K562 (cell line): ENCODE measurements at regions of chr1 and their contacts with region 1.

Region 1: DNA sequence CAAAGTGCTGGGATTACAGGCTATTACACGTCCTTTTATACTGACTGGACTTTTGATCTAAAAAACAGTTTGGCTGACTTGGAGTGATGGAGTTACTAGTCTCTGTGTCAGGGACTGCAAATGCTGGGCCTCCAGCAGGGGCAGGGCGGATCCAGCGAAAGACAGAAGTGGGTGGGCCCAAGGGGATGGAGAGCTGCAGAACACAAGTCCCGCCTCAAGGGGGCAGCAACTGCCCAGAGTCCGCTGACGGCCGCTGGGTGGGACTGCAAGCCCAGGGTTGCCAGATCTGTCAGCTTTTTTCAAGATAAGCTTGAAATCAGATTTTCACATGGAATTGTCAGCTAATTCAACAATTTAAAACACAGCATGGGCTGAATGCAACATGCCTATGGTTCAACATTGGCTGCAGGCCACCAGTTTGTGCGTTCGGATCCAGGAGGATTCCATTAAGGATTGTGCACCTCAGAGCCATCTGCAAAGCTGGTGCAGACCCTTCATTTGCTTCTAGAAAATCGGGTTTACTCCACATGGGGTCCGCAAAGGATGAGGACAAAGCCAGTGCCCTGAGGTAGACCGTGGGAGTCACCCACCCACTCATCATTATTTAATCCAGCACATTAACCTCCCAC is 10.7 kb downstream of the STMN1 start:
- DNase-seq: peak; percentile 95 to 99 (median 98)
- ATAC-seq: peak; percentile 88
- H3K4me3 ChIP-seq: no peak overlapping the region
- H3K27ac ChIP-seq: 0 out of 3 replicates have a peak overlapping the region, but pooled peaks have one; percentile 41
- H3K4me1 ChIP-seq: peaks cover 12 to 22% of the 10 kb centered on the region in 2 experiments
- H3K27me3 ChIP-seq: no peaks in the 10 kb centered on the region
- CTCF ChIP-seq: peak; percentile 100
- EP300 ChIP-seq: no peak; the same call in 1 of the 2 replicates
- POLR2A ChIP-seq: 0 out of 2 replicates have a peak, but pooled peaks have one; percentile 12
- RAD21 ChIP-seq: peak; percentile 100

Region 2: GRCh38 chr1:25174730-25175612 is 720.5 kb before region 1 on chr1:
- CTCF ChIA-PET with region 1: no interaction called
- POLR2A ChIA-PET with region 1: no interaction called
- in situ Hi-C with region 1: no loop called
- intact Hi-C with region 1: no loop called
- DNase-seq: no peak
- ATAC-seq: no peak
- H3K4me3 ChIP-seq: no peak overlapping the region
- H3K27ac ChIP-seq: no peak overlapping the region
- H3K4me1 ChIP-seq: no peaks in the 10 kb centered on the region
- H3K27me3 ChIP-seq: peaks cover 21 to 43% of the 10 kb centered on the region in 2 experiments; a peak in 4 of 5 replicates
- CTCF ChIP-seq: no peak
- EP300 ChIP-seq: no peak
- POLR2A ChIP-seq: no peak
- RAD21 ChIP-seq: no peak

Region 3: GRCh38 chr1:25879675-25880074 is 15.8 kb before region 1 on chr1:
- CTCF ChIA-PET with region 1: no interaction called
- POLR2A ChIA-PET with region 1: interaction called, 76 read pairs
- in situ Hi-C with region 1: no loop called
- intact Hi-C with region 1: no loop called
- DNase-seq: peak in 2 of 4 experiments; percentile 52 to 66
- ATAC-seq: peak; percentile 25; the same call in 2 of the 3 replicates
- H3K4me3 ChIP-seq: no peak overlapping the region
- H3K27ac ChIP-seq: no peak overlapping the region
- H3K4me1 ChIP-seq: peaks cover 24 to 40% of the 10 kb centered on the region in 2 experiments
- H3K27me3 ChIP-seq: no peaks in the 10 kb centered on the region
- CTCF ChIP-seq: no peak
- EP300 ChIP-seq: no peak
- POLR2A ChIP-seq: no peak
- RAD21 ChIP-seq: no peak

Region 4: DNA sequence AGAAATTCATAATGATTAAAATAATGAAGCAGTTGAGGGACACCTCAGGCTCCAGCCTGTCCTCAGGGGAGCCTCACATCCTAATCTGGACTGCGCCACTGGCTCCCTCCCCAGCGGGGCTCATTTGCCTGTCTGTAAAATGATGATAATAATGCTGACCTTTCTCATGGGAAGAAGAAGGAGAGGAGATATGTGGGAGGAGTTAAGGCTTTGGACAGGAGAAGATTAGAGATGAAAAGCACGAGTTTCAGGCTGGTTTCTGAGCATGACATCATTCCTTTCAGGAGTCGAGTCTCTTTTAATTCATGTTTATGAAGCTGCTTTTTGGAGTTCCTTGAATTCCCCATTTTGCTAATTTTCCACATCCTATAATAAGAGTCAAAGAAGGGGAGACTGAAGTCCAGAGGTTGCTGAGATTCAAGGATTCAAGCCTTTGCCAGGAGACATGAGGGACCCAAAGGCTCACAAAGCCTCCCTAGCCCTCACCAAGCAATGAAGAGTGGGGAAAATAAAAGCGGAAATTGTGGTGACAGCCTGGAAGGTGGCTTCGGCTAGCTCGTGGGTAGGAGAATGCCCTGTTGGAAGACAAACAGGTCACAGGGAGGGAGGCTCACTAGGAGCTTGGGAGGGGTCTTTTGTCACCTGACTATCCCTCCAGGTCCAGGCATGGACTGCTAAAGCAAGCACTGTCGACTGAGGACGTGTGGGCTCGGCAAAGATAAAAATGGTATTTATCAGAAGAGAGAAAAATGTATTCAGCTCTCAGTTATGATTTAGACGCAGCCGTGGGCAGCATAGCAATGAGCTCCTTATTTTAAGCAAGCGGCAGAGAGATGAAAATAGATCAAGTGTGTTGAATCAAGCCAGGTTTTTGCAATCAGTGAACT is 38.2 kb after region 1 on chr1:
- CTCF ChIA-PET with region 1: no interaction called
- POLR2A ChIA-PET with region 1: interaction called, 13 read pairs
- in situ Hi-C with region 1: no loop called
- intact Hi-C with region 1: no loop called
- DNase-seq: peak; percentile 72 to 96 (median 84)
- ATAC-seq: peak; percentile 96
- H3K4me3 ChIP-seq: peak overlapping the region; percentile 4
- H3K27ac ChIP-seq: peak overlapping the region; percentile 87
- H3K4me1 ChIP-seq: peaks cover 20 to 31% of the 10 kb centered on the region in 2 experiments
- H3K27me3 ChIP-seq: no peaks in the 10 kb centered on the region
- CTCF ChIP-seq: 0 out of 6 replicates have a peak, but pooled peaks of 1 of the 3 experiments have one; percentile 9
- EP300 ChIP-seq: peak; percentile 92
- POLR2A ChIP-seq: peak; percentile 65
- RAD21 ChIP-seq: peak in 1 of 2 experiments; percentile 19; a peak in 1 of 4 replicates

Region 5: DNA sequence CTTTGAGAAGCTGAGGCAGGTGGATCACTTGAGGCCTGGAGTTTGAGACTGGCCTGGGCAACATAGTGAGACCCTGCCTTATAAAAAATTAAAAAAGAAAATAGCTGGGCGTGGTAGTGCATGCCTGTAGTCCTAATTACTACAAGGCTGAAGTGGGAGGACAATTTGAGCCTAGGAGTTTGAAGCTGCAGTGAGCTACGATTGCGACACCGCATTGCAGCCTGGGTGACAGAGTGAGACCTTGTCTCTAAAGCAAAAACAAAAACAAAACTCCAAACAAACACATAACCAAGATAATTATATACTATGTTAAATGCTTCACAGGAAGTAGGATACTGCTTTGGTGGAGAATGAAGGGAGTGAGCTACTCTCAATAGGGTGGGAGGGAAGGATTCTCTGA is 107.8 kb after region 1 on chr1:
- CTCF ChIA-PET with region 1: interaction called, 120 read pairs
- POLR2A ChIA-PET with region 1: interaction called, 89 read pairs
- in situ Hi-C with region 1: loop called (anchors 5 kb)
- intact Hi-C with region 1: loop called (anchors 1 kb)
- DNase-seq: no peak
- ATAC-seq: no peak
- H3K4me3 ChIP-seq: no peak overlapping the region
- H3K27ac ChIP-seq: no peak overlapping the region
- H3K4me1 ChIP-seq: peaks cover 29 to 34% of the 10 kb centered on the region in 2 experiments; a peak in 4 of 5 replicates
- H3K27me3 ChIP-seq: no peaks in the 10 kb centered on the region
- CTCF ChIP-seq: no peak
- EP300 ChIP-seq: no peak
- POLR2A ChIP-seq: no peak
- RAD21 ChIP-seq: no peak

Region 6: GRCh38 chr1:26029471-26030135 is 134.1 kb after region 1 on chr1:
- CTCF ChIA-PET with region 1: interaction called, 25 read pairs
- POLR2A ChIA-PET with region 1: interaction called, 9 read pairs
- in situ Hi-C with region 1: no loop called
- intact Hi-C with region 1: loop called (anchors 1 kb)
- DNase-seq: peak; percentile 58 to 72 (median 64)
- ATAC-seq: peak; percentile 69
- H3K4me3 ChIP-seq: no peak overlapping the region
- H3K27ac ChIP-seq: no peak overlapping the region
- H3K4me1 ChIP-seq: peaks cover 25 to 43% of the 10 kb centered on the region in 2 experiments
- H3K27me3 ChIP-seq: no peaks in the 10 kb centered on the region
- CTCF ChIP-seq: peak; percentile 68 to 91 (median 71)
- EP300 ChIP-seq: no peak
- POLR2A ChIP-seq: no peak
- RAD21 ChIP-seq: peak; percentile 68 to 84

Region 7: DNA sequence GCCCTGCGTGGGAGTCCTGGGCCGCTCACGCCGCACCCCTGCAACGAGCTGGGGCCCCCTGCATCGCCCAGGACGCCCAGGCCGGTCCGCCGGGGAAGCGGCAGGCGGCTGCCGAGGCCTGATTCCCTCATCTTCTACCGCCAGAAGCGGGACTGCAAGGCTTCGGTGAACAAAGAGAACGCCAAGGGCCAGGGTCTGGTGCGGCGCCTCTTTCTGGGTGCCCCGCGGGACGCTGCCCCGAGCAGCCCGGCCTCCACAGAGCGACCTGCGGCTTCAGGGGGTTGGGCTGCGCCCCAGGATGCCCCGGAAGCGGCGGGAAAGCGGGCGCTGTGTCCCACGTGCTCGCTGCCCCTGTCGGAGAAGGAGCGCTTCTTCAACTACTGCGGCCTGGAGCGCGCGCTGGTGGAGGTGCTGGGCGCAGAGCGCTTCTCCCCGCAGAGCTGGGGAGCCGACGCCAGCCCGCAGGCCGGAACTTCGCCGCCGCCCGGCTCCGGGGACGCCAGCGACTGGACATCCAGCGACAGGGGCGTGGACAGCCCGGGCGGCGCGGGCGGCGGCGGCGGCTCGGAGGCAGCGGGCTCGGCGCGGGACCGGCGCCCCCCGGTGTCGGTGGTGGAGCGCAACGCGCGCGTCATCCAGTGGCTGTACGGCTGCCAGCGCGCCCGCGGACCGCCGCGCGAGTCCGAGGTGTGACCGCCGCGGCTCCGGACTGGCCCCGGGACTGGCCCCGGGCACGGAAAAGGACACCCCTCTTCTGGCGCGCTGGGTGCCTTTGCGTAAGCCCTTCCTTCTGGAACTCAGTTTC is 266.1 kb after region 1 on chr1:
- CTCF ChIA-PET with region 1: interaction called, 14 read pairs
- POLR2A ChIA-PET with region 1: no interaction called
- in situ Hi-C with region 1: no loop called
- intact Hi-C with region 1: no loop called
- DNase-seq: peak; percentile 89 to 95 (median 92)
- ATAC-seq: peak; percentile 86
- H3K4me3 ChIP-seq: peak overlapping the region; percentile 43
- H3K27ac ChIP-seq: peak overlapping the region; percentile 80
- H3K4me1 ChIP-seq: peaks cover 29 to 58% of the 10 kb centered on the region in 2 experiments
- H3K27me3 ChIP-seq: no peaks in the 10 kb centered on the region
- CTCF ChIP-seq: peak; percentile 27 to 73 (median 63); a peak in 4 of 6 replicates
- EP300 ChIP-seq: peak; percentile 4; the same call in 1 of the 2 replicates
- POLR2A ChIP-seq: peak; percentile 81
- RAD21 ChIP-seq: peak; percentile 60 to 84